ENCODE measurements at regions of chr1 and their contacts with region 1.

Region 1: DNA sequence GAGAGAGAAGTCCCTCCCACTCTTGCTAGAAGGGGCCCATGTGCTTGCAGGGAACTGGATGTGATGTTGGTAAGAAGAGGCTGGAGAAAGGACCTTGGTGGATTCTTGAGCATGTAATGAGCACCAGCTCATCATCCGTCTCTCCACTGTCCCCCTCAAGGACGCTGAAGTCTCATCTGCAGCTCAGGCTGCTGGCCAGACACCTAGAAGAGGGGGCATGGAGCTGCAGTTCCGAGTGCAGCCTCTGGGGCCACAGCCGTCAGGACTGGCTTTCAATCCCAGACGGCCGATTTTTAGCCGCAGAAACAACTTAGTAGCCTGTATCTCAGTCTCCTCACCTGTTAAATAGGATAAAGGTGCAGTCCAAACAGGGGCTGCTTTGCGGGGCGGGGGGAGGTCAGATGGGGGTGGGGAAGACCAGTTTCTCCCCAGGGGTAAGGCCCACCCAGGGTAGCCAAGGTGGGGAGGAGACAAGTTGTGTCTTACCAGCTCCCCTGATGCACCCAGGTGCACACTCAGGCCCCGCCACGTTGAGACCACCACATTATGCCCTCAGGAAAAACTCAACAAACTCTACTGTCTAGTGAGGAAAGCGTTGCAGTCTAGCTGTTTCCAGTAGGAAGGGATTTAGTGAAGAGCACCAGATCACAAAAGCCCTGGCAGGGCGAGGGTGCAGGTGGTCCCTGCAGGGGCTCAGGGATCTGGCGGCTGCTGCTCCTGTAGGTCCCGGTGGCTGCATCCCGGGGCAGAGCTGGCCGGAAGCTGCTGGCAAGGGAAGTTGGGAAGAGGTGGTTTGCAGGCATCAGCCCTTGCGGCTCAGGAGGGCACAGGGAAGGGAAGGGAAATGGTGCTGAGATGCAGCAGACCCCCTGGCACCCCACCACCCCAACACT is 29.5 kb downstream of the LDLRAP1 start:
- DNase-seq: peak in 7 of 9 donors; percentile 42 to 54 (median 49)
- ATAC-seq: peak; percentile 80
- H3K4me3 ChIP-seq: no peak overlapping the region
- H3K4me3 Mint-ChIP-seq: peak overlapping the region in 7 of 10 donors; percentile 7 to 43 (median 29)
- H3K27ac ChIP-seq: peak overlapping the region; percentile 24
- H3K27ac Mint-ChIP-seq: peak overlapping the region in 8 of 9 donors; percentile 71 to 92 (median 79)
- H3K4me1 ChIP-seq: peaks cover 8 to 28% of the 10 kb centered on the region in 2 donors
- H3K4me1 Mint-ChIP-seq: peaks cover 11 to 73% (median 58%) of the 10 kb centered on the region in 7 donors
- H3K27me3 ChIP-seq: no peaks in the 10 kb centered on the region
- H3K27me3 Mint-ChIP-seq: no peaks in the 10 kb centered on the region

Region 2: DNA sequence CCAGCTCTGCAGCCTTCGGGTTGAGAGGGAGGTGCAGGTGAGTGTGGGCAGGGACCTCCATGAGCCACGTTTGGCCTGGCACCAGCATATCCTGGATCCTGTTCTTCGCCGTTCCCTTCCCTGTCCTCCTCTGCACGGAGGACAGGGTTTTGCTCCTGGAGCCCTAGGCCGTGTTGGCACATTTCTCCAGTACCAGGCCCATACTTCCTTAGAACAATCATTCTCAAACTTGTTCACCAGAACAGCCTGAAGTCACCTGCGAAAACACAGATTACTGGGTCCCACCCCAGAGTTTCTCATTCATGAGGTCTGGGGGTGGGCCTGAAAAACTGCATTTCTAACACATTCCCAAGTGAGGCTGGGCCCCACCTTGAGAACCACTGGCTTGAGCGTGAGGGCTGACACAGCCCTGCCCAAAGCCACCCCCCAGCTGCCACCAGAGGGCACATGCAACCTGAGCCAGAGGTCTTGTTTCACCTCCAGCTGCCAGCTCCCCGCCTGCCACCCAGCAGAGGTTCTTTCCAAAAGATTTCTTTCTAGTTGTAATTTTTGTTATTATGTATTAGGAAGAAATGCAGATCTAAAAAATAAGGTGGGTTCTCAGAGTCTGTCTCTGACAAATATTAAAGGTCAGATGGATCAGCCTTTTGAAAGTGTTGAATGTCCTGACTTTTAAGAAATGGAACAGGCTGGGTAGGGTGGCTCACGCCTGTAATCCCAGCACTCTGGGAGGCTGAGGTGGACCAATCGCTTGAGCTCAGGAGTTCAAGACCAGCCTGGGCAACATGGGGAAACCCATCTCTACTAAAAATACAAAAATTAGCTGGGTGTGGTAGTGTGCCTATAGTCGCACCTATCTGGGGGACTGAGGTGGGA is 69.2 kb before region 1 on chr1:
- CTCF ChIA-PET with region 1: interaction called, 34 read pairs
- POLR2A ChIA-PET with region 1: interaction called, 33 read pairs
- intact Hi-C with region 1: no loop called
- DNase-seq: peak; percentile 47 to 82 (median 75)
- ATAC-seq: peak; percentile 95
- H3K4me3 ChIP-seq: no peak overlapping the region
- H3K4me3 Mint-ChIP-seq: peak overlapping the region in 1 of 10 donors; percentile 2
- H3K27ac ChIP-seq: peak overlapping the region; percentile 6
- H3K27ac Mint-ChIP-seq: peak overlapping the region in 8 of 9 donors; percentile 68 to 92 (median 76)
- H3K4me1 ChIP-seq: peaks cover 0 to 20% of the 10 kb centered on the region in 2 donors
- H3K4me1 Mint-ChIP-seq: peaks cover 12 to 39% (median 31%) of the 10 kb centered on the region in 7 donors
- H3K27me3 ChIP-seq: no peaks in the 10 kb centered on the region
- H3K27me3 Mint-ChIP-seq: peaks cover 0 to 6% (median 0%) of the 10 kb centered on the region in 5 donors

Region 3: DNA sequence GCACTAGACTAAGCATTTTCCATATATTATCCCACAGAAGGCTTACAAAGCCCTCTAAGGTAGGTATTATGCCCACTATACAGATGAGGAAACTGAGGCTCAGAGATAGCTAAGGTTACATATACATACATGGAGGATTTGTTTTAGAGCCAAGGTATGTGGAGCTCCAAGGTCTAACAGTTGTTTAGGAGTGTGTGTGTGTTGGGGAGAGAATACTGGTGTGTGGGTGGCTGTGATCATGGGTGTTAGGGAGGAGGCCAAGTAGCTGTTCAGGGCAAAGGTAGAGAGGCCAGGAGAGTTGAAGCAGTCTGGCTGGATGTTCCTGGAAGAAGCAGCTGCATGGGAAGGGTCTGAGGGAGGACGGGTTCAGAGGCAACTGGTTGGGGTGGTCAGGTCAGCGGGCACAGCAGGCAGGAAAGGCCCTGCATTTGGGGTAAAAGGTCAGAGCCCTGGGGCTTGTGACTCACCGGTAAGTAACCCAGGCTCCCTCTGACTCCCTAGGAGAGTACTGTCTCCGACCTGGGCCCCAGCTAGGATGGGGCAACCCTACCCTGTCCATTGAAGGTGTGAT is 34.7 kb before region 1 on chr1:
- CTCF ChIA-PET with region 1: interaction called, 4 read pairs
- POLR2A ChIA-PET with region 1: interaction called, 442 read pairs
- intact Hi-C with region 1: no loop called
- DNase-seq: no peak
- ATAC-seq: no peak
- H3K4me3 ChIP-seq: no peak overlapping the region
- H3K4me3 Mint-ChIP-seq: no peak overlapping the region
- H3K27ac ChIP-seq: no peak overlapping the region
- H3K27ac Mint-ChIP-seq: peak overlapping the region in 5 of 9 donors; percentile 0 to 49 (median 20)
- H3K4me1 ChIP-seq: peaks cover 0 to 4% of the 10 kb centered on the region in 2 donors
- H3K4me1 Mint-ChIP-seq: peaks cover 3 to 12% (median 8%) of the 10 kb centered on the region in 7 donors
- H3K27me3 ChIP-seq: no peaks in the 10 kb centered on the region
- H3K27me3 Mint-ChIP-seq: peaks cover 0 to 33% (median 0%) of the 10 kb centered on the region in 5 donors

Region 4: GRCh38 chr1:25549273-25550154 is 23.4 kb before region 1 on chr1:
- CTCF ChIA-PET with region 1: interaction called, 13 read pairs
- POLR2A ChIA-PET with region 1: interaction called, 442 read pairs
- intact Hi-C with region 1: no loop called
- DNase-seq: peak in 8 of 9 donors; percentile 54 to 81 (median 66)
- ATAC-seq: peak; percentile 96
- H3K4me3 ChIP-seq: peak overlapping the region; percentile 48
- H3K4me3 Mint-ChIP-seq: peak overlapping the region; percentile 74 to 87 (median 85)
- H3K27ac ChIP-seq: peak overlapping the region; percentile 77
- H3K27ac Mint-ChIP-seq: peak overlapping the region; percentile 89 to 98 (median 96)
- H3K4me1 ChIP-seq: peaks cover 77 to 94% of the 10 kb centered on the region in 2 donors
- H3K4me1 Mint-ChIP-seq: peaks cover 62 to 100% (median 92%) of the 10 kb centered on the region in 7 donors
- H3K27me3 ChIP-seq: no peaks in the 10 kb centered on the region
- H3K27me3 Mint-ChIP-seq: peaks cover 0 to 1% (median 0%) of the 10 kb centered on the region in 5 donors

Region 5: GRCh38 chr1:25608488-25609178 is 35.7 kb after region 1 on chr1:
- CTCF ChIA-PET with region 1: interaction called, 10 read pairs
- POLR2A ChIA-PET with region 1: interaction called, 5 read pairs
- intact Hi-C with region 1: no loop called
- DNase-seq: peak; percentile 69 to 87 (median 85)
- ATAC-seq: peak; percentile 100
- H3K4me3 ChIP-seq: no peak overlapping the region
- H3K4me3 Mint-ChIP-seq: peak overlapping the region; percentile 1 to 78 (median 47)
- H3K27ac ChIP-seq: peak overlapping the region; percentile 9
- H3K27ac Mint-ChIP-seq: peak overlapping the region in 6 of 9 donors; percentile 15 to 71 (median 52)
- H3K4me1 ChIP-seq: peaks cover 0 to 4% of the 10 kb centered on the region in 2 donors
- H3K4me1 Mint-ChIP-seq: peaks cover 7 to 28% (median 21%) of the 10 kb centered on the region in 7 donors
- H3K27me3 ChIP-seq: peaks cover 0 to 6% of the 10 kb centered on the region in 2 donors
- H3K27me3 Mint-ChIP-seq: peaks cover 0 to 79% (median 0%) of the 10 kb centered on the region in 5 donors

Measured in naive thymus-derived CD4-positive, alpha-beta T cell (primary cell).